Activated B cell treated with CpG ODN at 0.5 μM for 24 hours (primary cell): ENCODE measurements at regions of chr3 and their contacts with region 1.

Region 1: DNA sequence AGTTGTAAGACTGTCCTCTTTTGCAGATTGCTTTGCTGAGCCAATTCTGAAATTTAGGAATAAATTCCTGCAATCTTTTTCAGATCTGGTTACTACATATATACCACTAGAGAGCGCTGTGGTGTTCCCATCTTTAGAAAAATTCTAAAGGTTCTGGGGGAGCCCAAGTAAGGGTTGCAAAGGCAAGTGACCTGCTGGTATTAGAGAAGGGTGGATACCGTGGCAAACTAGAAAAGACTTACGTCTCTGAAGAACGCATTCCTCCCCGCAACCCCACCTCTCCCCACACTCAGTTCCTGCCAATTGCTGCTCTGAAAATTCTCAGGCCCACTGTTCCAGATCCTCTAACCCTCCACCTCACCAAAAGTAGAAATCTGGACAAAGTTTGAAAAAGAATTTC is 48.5 kb downstream of the EFHB start:
- DNase-seq: no peak
- ATAC-seq: no peak
- H3K4me3 Mint-ChIP-seq: no peak overlapping the region
- H3K27ac Mint-ChIP-seq: no peak overlapping the region
- H3K4me1 Mint-ChIP-seq: no peaks in the 10 kb centered on the region
- H3K27me3 Mint-ChIP-seq: no peaks in the 10 kb centered on the region
- CTCF ChIP-seq: no peak

Region 2: DNA sequence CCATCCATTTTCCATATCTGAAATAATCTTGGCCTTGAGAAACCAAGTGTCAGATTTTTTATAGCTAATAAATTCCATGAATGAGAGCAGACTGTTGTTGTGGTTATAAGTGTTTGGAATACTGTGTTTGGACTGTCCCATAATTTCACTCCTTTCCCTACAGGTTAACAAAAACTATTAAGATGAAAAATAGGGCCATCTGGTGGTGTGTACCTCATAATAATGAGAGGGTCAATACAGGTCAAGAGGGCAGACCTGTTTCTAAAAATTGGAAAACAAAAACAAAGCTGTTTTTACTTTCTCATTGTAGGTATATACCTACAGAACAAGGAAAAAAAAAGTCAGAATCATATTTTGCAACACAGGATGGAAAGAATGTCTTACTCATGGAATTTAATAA is 854.3 kb after region 1 on chr3:
- CTCF ChIA-PET with region 1: no interaction called
- POLR2A ChIA-PET with region 1: no interaction called
- intact Hi-C with region 1: loop called (anchors 10 kb)
- DNase-seq: no peak
- ATAC-seq: no peak
- H3K4me3 Mint-ChIP-seq: no peak overlapping the region
- H3K27ac Mint-ChIP-seq: no peak overlapping the region
- H3K4me1 Mint-ChIP-seq: no peaks in the 10 kb centered on the region
- H3K27me3 Mint-ChIP-seq: no peaks in the 10 kb centered on the region
- CTCF ChIP-seq: no peak